CD4-positive, alpha-beta memory T cell (primary cell): ENCODE measurements at regions of chr6 and their contacts with region 1.

Region 1: DNA sequence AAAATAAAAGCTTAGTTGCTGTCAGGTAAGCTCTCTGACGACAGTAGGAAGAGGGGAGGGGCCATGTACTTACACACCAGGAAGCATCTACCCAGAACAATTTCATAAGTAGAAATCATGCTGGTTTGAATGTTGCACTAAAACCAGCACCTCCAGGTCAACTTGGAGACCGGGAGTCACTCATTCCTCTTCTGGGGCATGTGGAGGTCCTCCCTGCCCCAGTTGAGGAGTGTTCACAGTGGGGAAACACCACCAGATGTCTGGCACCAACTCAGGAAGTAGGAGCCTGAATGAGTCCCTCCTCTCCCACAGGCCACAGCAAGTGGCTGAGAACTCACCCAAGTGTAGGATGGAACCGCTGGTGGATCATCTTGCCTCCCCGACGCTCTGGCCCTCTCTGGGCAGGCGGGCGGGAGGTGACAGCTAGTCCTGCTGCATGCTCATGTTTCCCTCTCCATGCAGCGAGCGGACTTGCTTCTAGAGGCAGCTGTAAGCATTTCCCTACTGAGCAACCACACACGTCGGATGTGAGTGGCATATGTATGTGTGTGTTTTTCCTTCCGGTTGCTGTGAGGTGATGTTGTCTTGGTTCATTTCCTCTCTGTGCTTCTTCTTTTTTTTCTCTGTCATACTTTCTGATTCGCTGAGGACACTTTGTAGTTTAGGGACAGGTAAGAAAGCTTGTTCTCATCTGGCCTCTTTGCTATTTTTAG is 149.5 kb upstream of the NEDD9 start:
- DNase-seq: peak; percentile 81 to 92 (median 88)
- H3K4me3 ChIP-seq: peak overlapping the region; percentile 66 to 82
- H3K4me3 Mint-ChIP-seq: peak overlapping the region; percentile 87 to 96 (median 94)
- H3K27ac ChIP-seq: peak overlapping the region; percentile 73
- H3K27ac Mint-ChIP-seq: peak overlapping the region; percentile 91 to 98 (median 96)
- H3K4me1 ChIP-seq: peaks cover 49% of the 10 kb centered on the region
- H3K4me1 Mint-ChIP-seq: peaks cover 49 to 75% (median 58%) of the 10 kb centered on the region in 4 donors
- H3K27me3 ChIP-seq: no peaks in the 10 kb centered on the region
- H3K27me3 Mint-ChIP-seq: no peaks in the 10 kb centered on the region

Region 2: DNA sequence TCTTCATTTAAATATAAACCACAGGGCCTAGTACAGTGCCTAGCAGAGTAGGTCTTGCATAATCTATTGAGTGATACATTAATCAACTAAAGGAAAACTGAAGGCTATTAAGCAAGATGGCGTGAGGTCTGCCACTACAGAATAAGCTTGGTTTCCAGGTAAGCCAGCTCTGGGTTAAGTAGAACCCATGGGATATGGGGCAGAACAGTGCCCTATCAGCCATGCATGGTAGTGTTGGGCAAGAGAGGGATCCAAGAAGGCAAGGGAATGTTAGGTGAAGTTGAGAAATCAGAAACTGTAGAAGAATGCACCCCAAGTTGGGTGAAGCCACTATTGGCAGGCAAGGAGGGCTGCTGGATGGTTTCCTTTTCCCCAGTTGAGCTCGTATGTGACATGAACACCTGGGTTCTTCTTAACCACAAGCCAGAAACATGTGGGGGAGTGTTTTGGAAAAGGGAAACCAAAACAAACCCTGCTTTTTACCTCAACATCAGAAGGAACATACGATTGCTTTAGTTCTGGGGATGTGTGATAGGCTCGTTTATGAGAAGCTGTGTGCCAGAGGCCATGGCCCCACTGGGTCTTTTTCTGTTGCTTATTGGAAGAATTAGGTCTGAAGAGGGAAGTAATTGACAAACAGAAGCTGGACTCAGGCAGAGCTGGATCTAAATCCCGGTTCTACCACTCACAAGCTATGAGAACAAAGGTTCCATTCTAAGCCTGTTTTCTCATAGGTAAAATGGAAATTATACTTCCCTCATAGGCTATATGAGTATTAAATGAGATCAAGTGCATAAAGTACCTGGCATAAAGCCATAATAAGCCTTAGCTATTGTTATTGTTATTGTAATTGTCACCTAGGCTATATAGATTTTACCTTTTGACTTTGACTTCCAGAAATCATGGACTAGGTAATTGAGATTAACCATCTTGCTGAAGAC is 183.0 kb before region 1 on chr6:
- CTCF ChIA-PET with region 1: interaction called, 4 read pairs
- POLR2A ChIA-PET with region 1: interaction called, 17 read pairs
- intact Hi-C with region 1: no loop called
- DNase-seq: peak; percentile 60 to 77 (median 72)
- H3K4me3 ChIP-seq: peak overlapping the region in 1 of 2 donors; percentile 27
- H3K4me3 Mint-ChIP-seq: peak overlapping the region; percentile 33 to 80 (median 63)
- H3K27ac ChIP-seq: peak overlapping the region; percentile 52
- H3K27ac Mint-ChIP-seq: peak overlapping the region; percentile 79 to 97 (median 94)
- H3K4me1 ChIP-seq: peaks cover 53% of the 10 kb centered on the region
- H3K4me1 Mint-ChIP-seq: peaks cover 40 to 72% (median 59%) of the 10 kb centered on the region in 4 donors
- H3K27me3 ChIP-seq: no peaks in the 10 kb centered on the region
- H3K27me3 Mint-ChIP-seq: no peaks in the 10 kb centered on the region

Region 3: GRCh38 chr6:11258260-11259237 is 123.4 kb before region 1 on chr6:
- CTCF ChIA-PET with region 1: interaction called, 5 read pairs
- POLR2A ChIA-PET with region 1: interaction called, 16 read pairs
- intact Hi-C with region 1: no loop called
- DNase-seq: peak; percentile 54 to 70 (median 66)
- H3K4me3 ChIP-seq: no peak overlapping the region
- H3K4me3 Mint-ChIP-seq: peak overlapping the region; percentile 3 to 65 (median 46)
- H3K27ac ChIP-seq: peak overlapping the region; percentile 38
- H3K27ac Mint-ChIP-seq: peak overlapping the region; percentile 63 to 96 (median 88)
- H3K4me1 ChIP-seq: peaks cover 62% of the 10 kb centered on the region
- H3K4me1 Mint-ChIP-seq: peaks cover 55 to 86% (median 69%) of the 10 kb centered on the region in 4 donors
- H3K27me3 ChIP-seq: no peaks in the 10 kb centered on the region
- H3K27me3 Mint-ChIP-seq: no peaks in the 10 kb centered on the region

Region 4: GRCh38 chr6:11366183-11366933 is 15.6 kb before region 1 on chr6:
- CTCF ChIA-PET with region 1: interaction called, 5 read pairs
- POLR2A ChIA-PET with region 1: interaction called, 25 read pairs
- intact Hi-C with region 1: loop called (anchors 1 kb)
- DNase-seq: peak; percentile 19 to 79 (median 38)
- H3K4me3 ChIP-seq: peak overlapping the region; percentile 9 to 42
- H3K4me3 Mint-ChIP-seq: peak overlapping the region; percentile 58 to 78 (median 72)
- H3K27ac ChIP-seq: peak overlapping the region; percentile 38
- H3K27ac Mint-ChIP-seq: peak overlapping the region; percentile 53 to 94 (median 79)
- H3K4me1 ChIP-seq: peaks cover 62% of the 10 kb centered on the region
- H3K4me1 Mint-ChIP-seq: peaks cover 60 to 92% (median 67%) of the 10 kb centered on the region in 4 donors
- H3K27me3 ChIP-seq: no peaks in the 10 kb centered on the region
- H3K27me3 Mint-ChIP-seq: no peaks in the 10 kb centered on the region

Region 5: DNA sequence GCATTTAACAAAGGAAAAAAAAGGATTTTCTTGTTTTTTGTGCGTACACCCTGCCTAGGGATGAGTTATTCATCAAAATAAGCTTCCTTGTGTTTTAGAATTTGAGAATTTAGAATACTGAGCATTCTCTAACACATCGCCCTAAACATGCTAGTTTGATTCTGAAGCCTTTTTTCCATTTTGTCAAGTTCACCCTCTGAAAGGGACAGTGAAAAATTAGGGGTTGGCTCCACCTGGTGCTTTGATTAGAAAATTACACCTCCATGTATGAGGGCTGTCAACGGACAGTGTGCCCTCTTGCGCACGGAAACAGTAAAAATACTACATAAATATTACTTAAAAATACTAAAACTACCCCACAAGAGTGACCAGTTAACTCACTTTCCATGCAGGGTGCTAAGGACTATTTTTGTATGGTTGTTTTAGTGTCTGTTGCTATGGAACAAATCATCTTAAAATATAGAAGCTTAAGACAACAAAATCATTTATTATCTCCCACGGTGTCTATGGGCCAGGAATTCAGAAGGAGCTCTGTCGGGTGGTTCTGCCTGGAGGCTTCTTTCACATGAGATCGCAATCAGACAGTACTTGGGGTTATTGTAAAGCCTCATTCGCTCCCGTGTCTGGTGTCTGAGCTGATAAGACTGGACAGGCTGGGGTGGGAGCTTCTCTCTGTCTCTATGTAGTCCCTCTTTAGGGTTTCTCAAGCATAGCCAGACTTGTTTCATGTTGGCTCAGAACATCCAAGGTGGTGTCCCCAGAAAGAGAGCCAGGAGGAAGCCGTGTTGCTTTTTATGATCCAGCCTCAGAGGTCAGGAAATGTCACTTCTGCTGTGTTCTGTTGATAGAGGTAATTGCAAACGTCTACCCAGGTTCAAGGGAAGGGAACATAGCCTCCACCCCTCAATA is 114.4 kb after region 1 on chr6:
- CTCF ChIA-PET with region 1: interaction called, 18 read pairs
- POLR2A ChIA-PET with region 1: no interaction called
- intact Hi-C with region 1: no loop called
- DNase-seq: peak; percentile 79 to 82 (median 80)
- H3K4me3 ChIP-seq: no peak overlapping the region
- H3K4me3 Mint-ChIP-seq: no peak overlapping the region
- H3K27ac ChIP-seq: no peak overlapping the region
- H3K27ac Mint-ChIP-seq: no peak overlapping the region
- H3K4me1 ChIP-seq: peaks cover 5% of the 10 kb centered on the region
- H3K4me1 Mint-ChIP-seq: peaks cover 0 to 1% (median 0%) of the 10 kb centered on the region in 4 donors
- H3K27me3 ChIP-seq: no peaks in the 10 kb centered on the region
- H3K27me3 Mint-ChIP-seq: no peaks in the 10 kb centered on the region

Region 6: GRCh38 chr6:11552442-11552841 is 170.5 kb after region 1 on chr6:
- CTCF ChIA-PET with region 1: no interaction called
- POLR2A ChIA-PET with region 1: no interaction called
- intact Hi-C with region 1: no loop called
- DNase-seq: no peak
- H3K4me3 ChIP-seq: no peak overlapping the region
- H3K4me3 Mint-ChIP-seq: no peak overlapping the region
- H3K27ac ChIP-seq: no peak overlapping the region
- H3K27ac Mint-ChIP-seq: no peak overlapping the region
- H3K4me1 ChIP-seq: no peaks in the 10 kb centered on the region
- H3K4me1 Mint-ChIP-seq: no peaks in the 10 kb centered on the region
- H3K27me3 ChIP-seq: no peaks in the 10 kb centered on the region
- H3K27me3 Mint-ChIP-seq: no peaks in the 10 kb centered on the region